ENCODE measurements at regions of chr5 and their contacts with region 1.

Region 1: GRCh38 chr5:149913436-149914419 is 30.9 kb downstream of the PDE6A start:
- DNase-seq: no peak
- H3K4me3 ChIP-seq: no peak overlapping the region
- H3K27ac ChIP-seq: no peak overlapping the region
- H3K4me1 ChIP-seq: peaks cover 0 to 22% of the 10 kb centered on the region in 2 experiments; a peak in 1 of 4 replicates
- H3K27me3 ChIP-seq: no peaks in the 10 kb centered on the region
- CTCF ChIP-seq: no peak
- EP300 ChIP-seq: no peak
- RAD21 ChIP-seq: no peak

Region 2: GRCh38 chr5:149932445-149933350 is 19.0 kb after region 1 on chr5:
- CTCF ChIA-PET with region 1: interaction called, 11 read pairs
- POLR2A ChIA-PET with region 1: no interaction called
- DNase-seq: peak; percentile 60
- H3K4me3 ChIP-seq: peak overlapping the region; percentile 41 to 57
- H3K27ac ChIP-seq: peak overlapping the region; percentile 45 to 76; a peak in 3 of 4 replicates
- H3K4me1 ChIP-seq: peaks cover 12 to 15% of the 10 kb centered on the region in 2 experiments; a peak in 3 of 4 replicates
- H3K27me3 ChIP-seq: no peaks in the 10 kb centered on the region
- CTCF ChIP-seq: peak; percentile 65
- EP300 ChIP-seq: no peak
- RAD21 ChIP-seq: peak; percentile 31; the same call in 1 of the 2 replicates

Measured in SK-N-SH (cell line).